WTC11 (cell line): ENCODE measurements at regions of chr11 and their contacts with region 1.

Region 1: GRCh38 chr11:88484873-88485621 is 147.5 kb upstream of the CTSC start:
- DNase-seq: peak; percentile 53
- ATAC-seq: peak; percentile 95
- H3K4me3 Mint-ChIP-seq: no peak overlapping the region
- H3K27ac Mint-ChIP-seq: no peak overlapping the region
- H3K4me1 Mint-ChIP-seq: peaks cover 4% of the 10 kb centered on the region
- H3K27me3 Mint-ChIP-seq: no peaks in the 10 kb centered on the region
- CTCF ChIP-seq: peak; percentile 79

Region 2: GRCh38 chr11:88318017-88318416 is 167.0 kb before region 1 on chr11:
- CTCF ChIA-PET with region 1: no interaction called
- POLR2A ChIA-PET with region 1: no interaction called
- DNase-seq: no peak
- ATAC-seq: no peak
- H3K4me3 Mint-ChIP-seq: no peak overlapping the region
- H3K27ac Mint-ChIP-seq: no peak overlapping the region
- H3K4me1 Mint-ChIP-seq: peaks cover 76% of the 10 kb centered on the region
- H3K27me3 Mint-ChIP-seq: no peaks in the 10 kb centered on the region
- CTCF ChIP-seq: no peak

Region 3: GRCh38 chr11:88353835-88354496 is 131.1 kb before region 1 on chr11:
- CTCF ChIA-PET with region 1: no interaction called
- POLR2A ChIA-PET with region 1: no interaction called
- DNase-seq: no peak
- ATAC-seq: no peak
- H3K4me3 Mint-ChIP-seq: no peak overlapping the region
- H3K27ac Mint-ChIP-seq: no peak overlapping the region
- H3K4me1 Mint-ChIP-seq: peaks cover 14% of the 10 kb centered on the region
- H3K27me3 Mint-ChIP-seq: no peaks in the 10 kb centered on the region
- CTCF ChIP-seq: no peak

Region 4: GRCh38 chr11:88421530-88421929 is 63.5 kb before region 1 on chr11:
- CTCF ChIA-PET with region 1: no interaction called
- POLR2A ChIA-PET with region 1: no interaction called
- DNase-seq: no peak
- ATAC-seq: peak; percentile 85
- H3K4me3 Mint-ChIP-seq: no peak overlapping the region
- H3K27ac Mint-ChIP-seq: no peak overlapping the region
- H3K4me1 Mint-ChIP-seq: peaks cover 24% of the 10 kb centered on the region
- H3K27me3 Mint-ChIP-seq: no peaks in the 10 kb centered on the region
- CTCF ChIP-seq: no peak

Region 5: DNA sequence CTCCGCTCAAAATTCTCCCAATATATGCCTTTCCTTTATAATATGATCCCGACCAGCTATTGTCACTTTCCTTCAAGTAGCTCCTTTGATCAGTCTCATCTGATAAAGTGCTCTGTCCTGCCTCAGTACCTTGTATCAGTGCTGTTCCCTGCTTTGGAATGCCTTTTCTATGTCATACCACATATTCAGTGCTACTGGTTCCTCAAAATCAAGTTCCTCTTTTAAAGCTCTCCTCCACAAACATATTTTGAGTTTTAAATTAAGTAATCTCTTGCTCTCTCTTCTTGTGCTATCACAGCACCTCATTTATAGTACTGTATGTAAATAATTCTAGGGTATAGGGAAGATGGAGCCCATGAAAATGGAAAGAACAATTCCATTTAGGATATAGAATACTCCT is 10.4 kb before region 1 on chr11:
- CTCF ChIA-PET with region 1: interaction called, 17 read pairs
- POLR2A ChIA-PET with region 1: no interaction called
- DNase-seq: no peak
- ATAC-seq: no peak
- H3K4me3 Mint-ChIP-seq: no peak overlapping the region
- H3K27ac Mint-ChIP-seq: no peak overlapping the region
- H3K4me1 Mint-ChIP-seq: no peaks in the 10 kb centered on the region
- H3K27me3 Mint-ChIP-seq: no peaks in the 10 kb centered on the region
- CTCF ChIP-seq: no peak

Region 6: DNA sequence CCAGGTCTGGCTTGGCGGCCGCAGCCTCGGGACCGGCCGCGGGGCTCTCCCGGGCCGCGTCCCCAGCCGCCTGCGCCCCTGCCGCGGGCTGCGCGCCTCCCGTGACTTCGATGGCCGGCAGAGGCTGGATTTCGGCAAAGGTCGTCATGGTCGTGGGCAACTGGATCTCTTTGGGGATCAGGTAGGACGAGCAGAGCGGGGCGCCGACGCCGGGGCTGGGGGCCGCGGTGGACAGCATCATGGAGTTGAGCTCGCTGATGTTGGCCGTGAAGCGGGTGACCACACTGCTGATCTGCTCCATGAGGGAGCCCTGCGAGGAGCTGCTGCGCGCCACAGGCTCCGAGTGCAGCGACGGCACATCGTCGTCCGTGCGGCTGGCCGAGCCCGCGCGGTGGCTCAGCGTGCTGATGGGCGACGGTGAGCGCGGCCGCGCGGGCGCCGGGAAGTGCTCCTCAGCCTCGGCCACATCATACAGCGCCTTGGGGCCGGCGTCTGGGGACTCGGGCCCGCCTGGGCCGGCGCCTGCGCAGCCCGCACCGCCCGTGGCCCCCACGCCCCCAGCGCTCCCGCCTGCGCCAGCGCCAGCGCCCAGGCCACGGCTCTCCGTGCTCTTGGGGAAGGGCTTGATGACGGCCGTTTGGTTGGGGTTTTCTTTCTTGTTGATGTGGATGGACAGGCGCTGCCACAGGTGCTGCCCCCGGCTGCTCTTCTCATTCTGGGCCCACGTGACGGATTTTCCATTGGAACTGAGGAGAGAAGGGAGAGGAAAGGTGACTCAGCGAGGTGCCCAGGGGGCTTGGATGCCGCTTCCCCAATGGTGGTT is 23.9 kb after region 1 on chr11:
- CTCF ChIA-PET with region 1: interaction called, 12 read pairs
- POLR2A ChIA-PET with region 1: no interaction called
- DNase-seq: peak; percentile 60
- ATAC-seq: peak; percentile 84
- H3K4me3 Mint-ChIP-seq: peak overlapping the region; percentile 86
- H3K27ac Mint-ChIP-seq: no peak overlapping the region
- H3K4me1 Mint-ChIP-seq: peaks cover 39% of the 10 kb centered on the region
- H3K27me3 Mint-ChIP-seq: peaks cover 44% of the 10 kb centered on the region
- CTCF ChIP-seq: no peak